Activated T-helper 2 cell treated with anti-CD3 and anti-CD28 coated beads, Interferon-gamma antibody, Interleukin-2, Interleukin-4, amounts not matched to agents 10 μg/mL and 5 μg/mL and 100 μg/mL, durations not matched to agents 14 hours and 24 hours and 36 hours (primary cell): ENCODE measurements at regions of chr7 and their contacts with region 1.

Region 1: DNA sequence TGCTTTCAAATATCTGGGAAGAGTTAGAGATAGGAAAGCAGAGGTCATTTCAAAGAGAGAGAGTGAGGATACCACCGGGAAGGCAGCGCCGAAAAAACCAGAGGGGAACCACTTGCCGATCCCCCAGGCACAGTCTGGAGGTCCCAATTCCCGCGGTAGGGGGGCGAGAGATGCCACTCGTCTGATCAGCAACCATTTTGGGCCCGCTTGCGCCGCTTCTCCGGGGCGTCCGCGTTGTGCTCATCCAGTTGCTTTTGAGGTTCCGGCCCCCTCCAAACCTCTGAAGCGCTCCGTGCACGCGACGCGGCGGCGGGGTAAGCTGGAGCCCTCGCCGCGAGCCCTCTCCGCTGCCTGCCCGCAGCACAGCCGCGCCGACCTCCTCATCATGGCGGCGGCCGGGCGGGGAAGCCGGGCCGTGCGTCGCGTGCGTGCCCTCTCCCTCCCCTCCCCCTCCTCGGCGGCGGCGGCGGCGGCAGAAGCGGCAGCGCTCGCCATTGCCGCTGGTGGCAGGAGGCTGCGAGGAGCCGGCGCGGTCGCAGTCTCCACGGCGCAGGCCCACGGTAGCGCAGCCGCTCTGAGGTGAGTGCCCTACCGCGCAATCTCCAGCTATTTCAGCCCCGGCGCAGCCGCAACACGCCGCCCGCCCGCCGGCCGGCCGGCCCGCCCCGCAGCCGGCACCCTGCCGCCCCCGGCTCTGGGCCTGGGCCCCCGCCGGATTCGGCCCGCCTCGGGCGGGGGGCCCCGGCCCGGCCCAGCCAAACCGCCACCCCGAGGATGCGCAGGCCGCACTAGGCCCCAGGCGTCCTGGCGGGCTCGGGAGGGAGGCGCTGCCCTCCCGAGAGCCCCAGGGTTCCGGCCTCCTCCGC is at the start of gene NRF1:
- DNase-seq: peak; percentile 88
- H3K4me3 Mint-ChIP-seq: peak within 1 kb of the TSS; percentile 94
- H3K27ac Mint-ChIP-seq: peak within 1 kb of the TSS; percentile 97
- H3K4me1 Mint-ChIP-seq: peaks cover 47% of the 10 kb centered on the region
- H3K27me3 Mint-ChIP-seq: no peaks in the 10 kb centered on the region
- total RNA-seq, gene NRF1: 22.8 and 25.4 TPM in 2 replicates

Region 2: DNA sequence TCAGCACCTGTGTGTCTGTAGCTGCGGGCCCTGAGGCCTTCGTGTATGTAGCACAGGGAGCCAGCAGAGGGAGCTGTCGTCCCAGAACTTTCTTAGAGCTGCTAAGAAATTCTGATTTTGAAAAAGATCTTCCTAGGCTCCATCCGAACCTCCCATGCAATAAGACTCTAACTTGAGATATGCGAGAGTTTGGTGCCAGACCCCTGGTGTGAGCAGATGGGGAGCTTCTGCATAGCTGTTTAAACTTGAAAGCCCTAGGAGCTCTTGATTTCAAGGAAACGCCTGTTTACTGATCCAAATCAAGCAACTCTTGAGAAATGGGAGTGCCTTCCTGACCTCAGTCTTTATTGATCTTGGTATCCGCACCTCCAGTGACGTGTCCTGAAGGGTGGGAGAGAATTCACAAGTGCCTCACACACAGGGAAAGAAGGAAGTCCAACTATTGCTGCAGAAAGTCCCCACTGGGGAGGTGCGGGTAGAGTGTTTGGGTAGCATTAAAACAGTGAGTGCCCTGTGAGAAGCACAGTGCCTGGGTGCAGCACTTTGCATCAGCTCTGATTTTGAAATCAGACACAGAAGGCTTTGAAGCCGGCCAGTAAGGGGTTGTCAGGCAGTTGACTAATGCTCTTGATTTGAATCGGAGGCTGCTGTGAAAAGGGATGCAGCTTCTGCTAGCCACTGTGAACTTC is 243.6 kb before region 1 on chr7:
- intact Hi-C with region 1: loop called (anchors 10 kb)
- DNase-seq: peak; percentile 63
- H3K4me3 Mint-ChIP-seq: peak overlapping the region; percentile 68
- H3K27ac Mint-ChIP-seq: peak overlapping the region; percentile 86
- H3K4me1 Mint-ChIP-seq: peaks cover 31% of the 10 kb centered on the region
- H3K27me3 Mint-ChIP-seq: no peaks in the 10 kb centered on the region

Region 3: DNA sequence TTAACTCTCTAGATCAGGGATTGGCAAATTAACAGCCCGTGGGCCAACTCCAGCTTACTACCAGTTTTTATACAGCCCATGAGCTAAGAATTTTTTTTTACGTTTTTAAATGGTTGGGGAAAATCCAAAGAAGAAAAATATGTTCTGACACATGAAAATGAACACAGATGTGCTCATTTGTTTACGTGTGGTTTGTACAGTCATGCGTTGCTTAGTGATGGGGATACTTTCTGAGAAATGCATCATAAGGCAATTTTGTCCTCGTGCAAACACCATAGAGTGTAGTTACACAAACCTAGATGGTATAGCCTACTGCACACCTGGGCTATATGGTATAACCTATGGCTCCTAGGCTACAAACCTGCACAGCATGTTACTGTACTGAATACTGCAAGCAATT is 117.4 kb before region 1 on chr7:
- intact Hi-C with region 1: loop called (anchors 2 kb)
- DNase-seq: peak; percentile 16
- H3K4me3 Mint-ChIP-seq: no peak overlapping the region
- H3K27ac Mint-ChIP-seq: peak overlapping the region; percentile 72
- H3K4me1 Mint-ChIP-seq: peaks cover 44% of the 10 kb centered on the region
- H3K27me3 Mint-ChIP-seq: no peaks in the 10 kb centered on the region

Region 4: DNA sequence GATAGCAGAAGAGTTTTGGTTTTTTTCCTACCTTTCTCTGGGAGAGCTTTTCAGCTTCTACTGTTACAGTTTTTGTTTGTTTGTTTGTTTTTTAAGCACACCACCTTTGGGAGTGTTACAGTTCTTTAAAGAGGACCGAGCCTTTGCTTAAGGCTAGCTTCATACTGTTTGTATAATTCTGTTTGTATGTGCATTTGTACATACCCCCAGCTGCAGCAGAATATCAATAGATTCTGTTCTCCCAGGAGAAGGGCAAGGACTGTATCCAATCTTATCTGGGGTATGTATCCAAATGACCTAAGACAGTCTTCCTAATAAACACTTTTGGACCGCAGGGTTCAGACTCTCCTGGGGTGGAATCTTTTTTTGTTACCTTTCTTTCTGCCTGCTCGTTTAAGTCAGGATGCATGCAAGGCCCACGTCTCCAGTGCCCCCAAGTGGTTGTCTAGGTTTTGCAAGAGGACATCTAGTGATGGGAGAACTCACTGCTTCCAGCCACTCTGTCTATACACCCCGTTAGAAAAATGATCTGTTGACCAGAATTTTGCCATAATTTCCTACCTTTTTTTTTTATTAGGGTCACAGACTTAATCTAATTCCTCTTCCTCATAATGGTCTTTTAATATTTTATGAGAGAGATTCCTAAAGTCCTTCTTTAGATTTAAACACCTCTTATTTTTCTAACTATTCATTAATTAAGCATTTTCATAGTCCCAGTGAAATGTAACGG is 24.0 kb after region 1 on chr7:
- intact Hi-C with region 1: loop called (anchors 1 kb)
- DNase-seq: peak; percentile 49
- H3K4me3 Mint-ChIP-seq: no peak overlapping the region
- H3K27ac Mint-ChIP-seq: no peak overlapping the region
- H3K4me1 Mint-ChIP-seq: peaks cover 18% of the 10 kb centered on the region
- H3K27me3 Mint-ChIP-seq: no peaks in the 10 kb centered on the region

Region 5: DNA sequence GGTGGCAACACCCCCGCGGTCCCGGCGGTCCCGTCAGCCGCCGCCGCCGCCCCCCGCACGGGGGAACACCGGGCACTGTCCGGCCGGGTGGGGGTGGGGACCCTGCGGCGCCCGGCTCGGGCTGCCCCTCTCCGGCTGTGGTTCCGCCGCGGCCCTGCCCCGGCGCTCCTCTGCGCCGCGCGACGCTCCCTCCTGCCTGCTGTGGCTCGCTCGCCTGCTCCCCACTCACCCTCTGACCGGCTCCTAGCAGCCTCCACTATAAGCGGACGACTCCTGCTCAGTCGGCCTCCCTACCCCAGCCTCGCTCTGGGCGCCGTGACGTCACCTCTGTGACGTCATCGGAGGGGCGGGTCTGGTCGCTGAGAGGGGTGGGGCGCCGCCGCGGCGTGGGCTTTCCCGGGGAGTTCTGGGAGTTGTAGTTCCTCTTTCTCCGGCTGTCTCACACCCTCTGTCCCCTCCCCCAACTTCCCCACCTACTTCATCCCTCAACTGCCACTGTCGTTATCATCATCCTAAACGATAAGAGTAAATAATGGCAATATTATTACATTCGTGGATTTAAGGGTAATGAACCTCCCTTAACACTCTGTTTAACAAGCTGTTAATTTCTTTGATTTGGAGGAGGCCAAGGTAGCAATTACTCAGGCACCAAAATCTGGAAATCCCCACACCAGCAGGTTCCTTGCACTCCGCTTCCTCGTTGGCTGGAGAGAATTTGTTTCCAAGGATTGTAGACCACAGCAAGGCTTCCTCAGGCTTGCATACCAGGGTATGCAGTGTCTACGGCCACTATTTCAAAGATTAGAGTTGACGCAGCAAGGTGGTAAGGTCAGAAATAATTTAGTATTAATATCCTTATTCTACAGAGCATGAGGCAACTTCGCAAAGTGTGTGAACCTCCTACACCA is 341.4 kb after region 1 on chr7 and contains the start of gene UBE2H:
- intact Hi-C with region 1: loop called (anchors 5 kb)
- DNase-seq: peak; percentile 80
- H3K4me3 Mint-ChIP-seq: peak within 1 kb of the TSS; percentile 99
- H3K27ac Mint-ChIP-seq: peak within 1 kb of the TSS; percentile 100
- H3K4me1 Mint-ChIP-seq: peaks cover 10% of the 10 kb centered on the region
- H3K27me3 Mint-ChIP-seq: peaks cover 8% of the 10 kb centered on the region
- total RNA-seq, gene UBE2H: 16.4 and 23.9 TPM in 2 replicates